ENCODE measurements at regions of chr7 and their contacts with region 1.

Region 1: GRCh38 chr7:43631559-43631958 is 48.7 kb downstream of the STK17A start:
- DNase-seq: no peak
- H3K4me3 Mint-ChIP-seq: peak overlapping the region; percentile 50
- H3K27ac Mint-ChIP-seq: peak overlapping the region; percentile 81
- H3K4me1 Mint-ChIP-seq: peaks cover 78% of the 10 kb centered on the region
- H3K27me3 Mint-ChIP-seq: no peaks in the 10 kb centered on the region

Region 2: DNA sequence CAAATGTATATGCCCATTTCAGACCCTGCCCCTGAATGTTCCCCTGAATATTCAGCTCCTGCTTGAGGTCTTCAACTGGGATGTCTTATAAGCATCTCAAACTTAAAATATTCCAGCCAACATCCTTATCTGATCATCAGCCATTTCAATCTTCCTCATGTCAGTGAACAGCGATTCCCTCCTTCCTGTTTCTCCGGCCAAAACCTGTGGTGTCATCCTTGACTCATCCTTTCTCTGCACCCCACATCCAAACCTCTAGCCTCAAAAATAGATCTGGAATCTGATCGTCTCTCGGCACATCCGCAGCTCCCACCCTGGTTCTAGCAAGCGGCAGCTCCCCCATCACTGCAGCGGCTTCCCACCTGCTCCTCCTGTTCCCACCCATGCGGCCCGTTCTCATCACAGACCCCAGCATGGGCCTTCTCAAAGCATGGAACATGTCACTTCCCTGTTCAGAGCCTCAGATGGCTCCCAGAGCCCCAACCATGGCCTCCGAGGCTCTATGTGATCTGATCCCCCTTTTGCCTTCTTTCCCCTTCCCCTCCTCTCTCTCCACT is 353.4 kb before region 1 on chr7:
- intact Hi-C with region 1: no loop called
- DNase-seq: no peak
- H3K4me3 Mint-ChIP-seq: no peak overlapping the region
- H3K27ac Mint-ChIP-seq: no peak overlapping the region
- H3K4me1 Mint-ChIP-seq: no peaks in the 10 kb centered on the region
- H3K27me3 Mint-ChIP-seq: peaks cover 2% of the 10 kb centered on the region

Region 3: GRCh38 chr7:43612599-43613589 is 18.7 kb before region 1 on chr7:
- intact Hi-C with region 1: loop called (anchors 2 kb)
- DNase-seq: no peak
- H3K4me3 Mint-ChIP-seq: peak overlapping the region; percentile 8
- H3K27ac Mint-ChIP-seq: peak overlapping the region; percentile 77
- H3K4me1 Mint-ChIP-seq: peaks cover 58% of the 10 kb centered on the region
- H3K27me3 Mint-ChIP-seq: no peaks in the 10 kb centered on the region